Activated CD8-positive, alpha-beta T cell treated with anti-CD3 and anti-CD28 coated beads for 36 hours (primary cell): ENCODE measurements at regions of chr2 and their contacts with region 1.

Region 1: DNA sequence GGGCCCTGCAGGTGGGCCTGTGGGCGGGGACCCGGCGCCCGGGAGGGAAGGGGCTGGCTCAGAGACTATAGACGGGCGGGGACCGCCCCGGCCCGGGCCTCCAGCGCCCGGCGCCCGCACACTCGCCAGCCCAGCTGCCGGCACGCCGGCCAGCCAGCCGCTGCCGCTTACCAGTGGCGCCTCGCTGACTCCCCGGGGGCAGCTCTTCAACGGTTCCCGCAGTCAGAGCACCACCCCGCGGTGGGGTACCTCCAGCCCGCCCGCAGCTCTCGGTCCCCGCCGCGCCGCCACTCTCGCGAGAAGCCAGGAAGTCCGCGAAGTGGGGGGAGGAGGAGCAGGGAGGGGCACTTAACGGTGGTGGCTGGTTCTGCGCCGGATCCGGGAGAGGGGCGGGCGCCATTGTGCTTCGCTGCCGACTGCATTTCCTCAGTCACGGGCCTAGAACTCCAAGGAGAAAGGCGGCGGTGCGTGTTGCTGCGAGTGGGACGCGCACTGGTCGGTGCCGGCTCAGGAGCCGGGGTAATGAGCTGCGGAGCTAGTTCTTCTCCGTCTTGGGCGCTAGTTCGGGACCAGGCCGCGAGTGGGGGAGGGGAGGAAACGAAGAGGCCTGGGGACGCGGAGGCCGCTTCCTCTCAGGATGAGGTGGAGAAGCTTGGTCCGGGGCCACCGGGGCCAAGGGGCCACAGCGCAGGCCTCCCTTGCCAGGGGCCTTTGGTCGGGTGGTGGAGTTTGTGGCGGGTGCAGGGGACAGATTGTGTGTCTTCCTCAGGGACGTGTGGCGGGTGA is at the start of gene MARCHF7:
- DNase-seq: peak; percentile 97
- ATAC-seq: peak; percentile 95
- H3K4me3 Mint-ChIP-seq: peak within 1 kb of the TSS; percentile 100
- H3K27ac Mint-ChIP-seq: peak within 1 kb of the TSS; percentile 100
- H3K4me1 Mint-ChIP-seq: peaks cover 48% of the 10 kb centered on the region
- H3K27me3 Mint-ChIP-seq: no peaks in the 10 kb centered on the region
- CTCF ChIP-seq: peak; percentile 21
- total RNA-seq, gene MARCHF7: 79.2 to 80.3 TPM

Region 2: DNA sequence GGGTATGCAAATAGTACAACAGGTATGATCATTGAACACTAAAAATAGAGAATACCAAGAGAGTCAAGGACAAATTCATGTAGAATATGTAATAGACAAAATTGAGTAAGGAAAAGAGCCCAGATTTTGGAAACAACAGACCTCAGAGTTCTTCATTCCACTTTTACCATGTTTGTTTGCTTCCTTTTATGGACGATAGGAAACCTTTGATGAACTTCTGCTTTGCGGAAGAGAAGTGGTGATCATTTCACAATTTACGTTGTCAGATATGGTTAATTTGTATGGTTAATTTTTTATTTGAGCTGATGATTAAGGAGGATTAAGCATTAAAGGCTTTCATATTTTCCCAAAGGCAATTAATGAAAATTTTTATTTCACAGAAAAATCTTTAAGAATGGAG is 16.3 kb after region 1 on chr2:
- CTCF ChIA-PET with region 1: interaction called, 7 read pairs
- POLR2A ChIA-PET with region 1: interaction called, 10 read pairs
- intact Hi-C with region 1: no loop called
- DNase-seq: no peak
- ATAC-seq: no peak
- H3K4me3 Mint-ChIP-seq: no peak overlapping the region
- H3K27ac Mint-ChIP-seq: peak overlapping the region; percentile 14
- H3K4me1 Mint-ChIP-seq: peaks cover 47% of the 10 kb centered on the region
- H3K27me3 Mint-ChIP-seq: no peaks in the 10 kb centered on the region
- CTCF ChIP-seq: no peak